ENCODE measurements at regions of chr2 and their contacts with region 1.

Region 1: GRCh38 chr2:37196320-37197195 is at the start of gene CEBPZOS:
- DNase-seq: peak; percentile 93
- H3K4me3 Mint-ChIP-seq: peak within 1 kb of the TSS; percentile 99
- H3K27ac Mint-ChIP-seq: peak within 1 kb of the TSS; percentile 98
- H3K4me1 Mint-ChIP-seq: peaks cover 29% of the 10 kb centered on the region
- H3K27me3 Mint-ChIP-seq: peaks cover 2% of the 10 kb centered on the region
- total RNA-seq, gene CEBPZOS: 29.3 to 33.2 TPM

Region 2: DNA sequence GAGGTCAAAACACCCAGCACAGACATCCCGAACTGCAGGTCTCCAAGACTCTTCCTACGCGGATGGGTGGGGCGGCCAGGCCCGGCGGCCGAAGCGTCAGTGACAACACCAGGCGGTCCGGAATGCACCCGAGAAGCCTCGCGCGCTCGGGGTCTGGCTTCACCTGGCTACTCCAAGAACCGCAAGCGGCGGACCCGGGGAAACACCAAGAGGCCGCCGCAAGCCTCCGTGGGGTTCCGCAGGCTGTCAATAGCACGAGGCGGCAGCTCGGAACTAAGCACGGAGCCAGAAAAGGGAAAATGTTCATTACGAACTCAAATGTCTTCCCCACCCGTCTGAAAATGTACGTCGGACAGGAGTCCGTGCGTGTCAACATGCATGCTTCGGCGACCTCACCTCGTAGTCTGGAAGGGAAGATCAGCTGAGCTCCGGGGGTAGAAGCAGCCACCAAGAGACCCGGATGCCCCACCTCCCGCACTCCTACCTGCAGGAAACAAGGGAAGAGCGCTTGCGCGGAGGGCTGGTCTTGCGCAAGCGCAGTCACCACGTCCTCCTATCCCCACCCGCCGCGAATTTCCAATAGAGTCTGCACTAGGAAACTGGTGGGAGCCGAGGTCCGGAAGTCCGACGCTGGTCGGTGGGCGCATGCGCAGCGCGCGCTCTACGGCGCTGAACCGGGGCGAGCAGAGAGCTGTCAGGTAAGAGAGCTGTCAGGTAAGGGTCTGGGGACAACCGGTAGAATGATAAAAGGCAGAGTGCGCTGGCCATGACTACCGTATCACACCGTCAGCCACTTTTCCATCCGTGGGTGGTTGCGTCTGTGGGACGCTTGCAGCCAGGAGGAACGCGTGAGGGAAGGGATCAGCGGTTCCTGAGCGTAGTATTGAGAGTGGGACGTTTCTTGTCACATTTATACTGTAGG is 112.4 kb before region 1 on chr2 and contains the starts of genes GPATCH11 and HEATR5B:
- CTCF ChIA-PET with region 1: no interaction called
- POLR2A ChIA-PET with region 1: interaction called, 3 read pairs
- intact Hi-C with region 1: loop called (anchors 1 kb)
- DNase-seq: peak; percentile 96
- H3K4me3 Mint-ChIP-seq: no peak within 1 kb of the TSS
- H3K27ac Mint-ChIP-seq: no peak within 1 kb of the TSS
- H3K4me1 Mint-ChIP-seq: peaks cover 36% of the 10 kb centered on the region
- H3K27me3 Mint-ChIP-seq: no peaks in the 10 kb centered on the region
- total RNA-seq, gene GPATCH11: 12.6 to 13.0 TPM
- total RNA-seq, gene HEATR5B: 18.1 to 20.3 TPM

Region 3: GRCh38 chr2:37156857-37157714 is 39.5 kb before region 1 on chr2 and contains the start of gene EIF2AK2:
- CTCF ChIA-PET with region 1: no interaction called
- POLR2A ChIA-PET with region 1: interaction called, 3 read pairs
- intact Hi-C with region 1: loop called (anchors 2 kb)
- DNase-seq: peak; percentile 88
- H3K4me3 Mint-ChIP-seq: peak within 1 kb of the TSS; percentile 80
- H3K27ac Mint-ChIP-seq: peak within 1 kb of the TSS; percentile 74
- H3K4me1 Mint-ChIP-seq: peaks cover 34% of the 10 kb centered on the region
- H3K27me3 Mint-ChIP-seq: no peaks in the 10 kb centered on the region
- total RNA-seq, gene EIF2AK2: 48.1 to 52.6 TPM

Region 4: GRCh38 chr2:37168217-37168981 is 28.2 kb before region 1 on chr2:
- CTCF ChIA-PET with region 1: interaction called, 4 read pairs
- POLR2A ChIA-PET with region 1: no interaction called
- intact Hi-C with region 1: loop called (anchors 2 kb)
- DNase-seq: peak; percentile 41
- H3K4me3 Mint-ChIP-seq: no peak overlapping the region
- H3K27ac Mint-ChIP-seq: no peak overlapping the region
- H3K4me1 Mint-ChIP-seq: peaks cover 2% of the 10 kb centered on the region
- H3K27me3 Mint-ChIP-seq: no peaks in the 10 kb centered on the region

Region 5: GRCh38 chr2:37231241-37232130 is 34.9 kb after region 1 on chr2 and contains the starts of genes CEBPZ and NDUFAF7:
- CTCF ChIA-PET with region 1: no interaction called
- POLR2A ChIA-PET with region 1: interaction called, 7 read pairs
- intact Hi-C with region 1: loop called (anchors 1 kb)
- DNase-seq: peak; percentile 95
- H3K4me3 Mint-ChIP-seq: no peak within 1 kb of the TSS
- H3K27ac Mint-ChIP-seq: no peak within 1 kb of the TSS
- H3K4me1 Mint-ChIP-seq: peaks cover 36% of the 10 kb centered on the region
- H3K27me3 Mint-ChIP-seq: no peaks in the 10 kb centered on the region
- total RNA-seq, gene CEBPZ: 62.3 to 74.6 TPM
- total RNA-seq, gene NDUFAF7: 22.8 to 23.0 TPM

Measured in activated CD4-positive, alpha-beta memory T cell treated with anti-CD3 and anti-CD28 coated beads for 36 hours (primary cell).